ENCODE measurements at regions of chr7 and their contacts with region 1.

Region 1: DNA sequence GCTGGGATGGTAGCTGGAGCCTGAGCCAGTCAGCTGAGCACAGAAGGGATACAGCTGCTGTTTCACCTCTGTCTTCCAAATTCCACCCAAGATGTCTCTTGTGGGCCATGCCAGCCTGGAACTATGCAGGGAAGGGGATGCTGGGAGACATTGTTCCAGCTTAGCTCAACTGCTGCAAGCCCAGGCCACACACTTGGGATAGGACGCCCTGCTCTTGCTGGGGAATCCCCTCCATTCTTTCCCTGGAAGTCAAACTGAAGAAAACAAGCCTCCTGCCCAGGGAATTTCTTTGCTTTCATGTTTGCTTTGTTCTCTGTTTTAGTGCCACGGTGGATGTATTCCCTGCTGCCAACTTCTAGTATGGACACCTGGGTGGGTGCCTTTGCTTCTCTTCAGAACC is 55.2 kb upstream of the CDK13 start:
- DNase-seq: no peak
- ATAC-seq: no peak
- H3K4me3 ChIP-seq: no peak overlapping the region
- H3K27ac ChIP-seq: no peak overlapping the region
- H3K4me1 ChIP-seq: peaks cover 5% of the 10 kb centered on the region
- H3K27me3 ChIP-seq: no peaks in the 10 kb centered on the region
- CTCF ChIP-seq: no peak

Region 2: GRCh38 chr7:39948956-39949928 is 54.3 kb after region 1 on chr7:
- intact Hi-C with region 1: loop called (anchors 2 to 5 kb)
- DNase-seq: peak; percentile 99 to 100
- ATAC-seq: peak; percentile 87 to 93 (median 90)
- H3K4me3 ChIP-seq: peak overlapping the region; percentile 95
- H3K27ac ChIP-seq: peak overlapping the region; percentile 96
- H3K4me1 ChIP-seq: peaks cover 21% of the 10 kb centered on the region
- H3K27me3 ChIP-seq: no peaks in the 10 kb centered on the region
- CTCF ChIP-seq: no peak

Region 3: GRCh38 chr7:40033826-40034225 is 138.9 kb after region 1 on chr7:
- intact Hi-C with region 1: no loop called
- DNase-seq: no peak
- ATAC-seq: no peak
- H3K4me3 ChIP-seq: no peak overlapping the region
- H3K27ac ChIP-seq: no peak overlapping the region
- H3K4me1 ChIP-seq: peaks cover 8% of the 10 kb centered on the region
- H3K27me3 ChIP-seq: no peaks in the 10 kb centered on the region
- CTCF ChIP-seq: no peak

Region 4: DNA sequence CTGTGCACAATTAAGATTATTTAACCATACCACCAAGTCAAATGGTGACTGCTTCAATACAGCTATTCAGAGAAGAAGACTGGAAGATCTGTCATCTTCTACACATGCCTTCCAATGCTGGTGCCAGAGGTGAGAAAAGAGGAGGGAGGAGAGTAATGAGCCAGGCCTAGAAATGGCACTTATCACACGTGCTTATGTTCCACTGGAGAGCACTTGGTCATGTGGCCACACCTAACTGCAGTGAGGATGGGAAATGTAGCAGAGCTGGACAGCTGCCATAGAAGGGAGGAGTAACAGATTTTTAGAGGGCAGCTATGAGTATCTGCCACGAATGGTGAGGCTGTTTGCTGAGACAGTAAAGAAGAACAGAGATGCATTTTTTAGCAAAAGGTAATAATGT is 162.4 kb after region 1 on chr7:
- intact Hi-C with region 1: loop called (anchors 1 to 2 kb)
- DNase-seq: no peak
- ATAC-seq: peak in 2 of 4 donors; percentile 48 to 55
- H3K4me3 ChIP-seq: no peak overlapping the region
- H3K27ac ChIP-seq: no peak overlapping the region
- H3K4me1 ChIP-seq: peaks cover 10% of the 10 kb centered on the region
- H3K27me3 ChIP-seq: no peaks in the 10 kb centered on the region
- CTCF ChIP-seq: no peak

Region 5: GRCh38 chr7:40134428-40135316 is 239.8 kb after region 1 on chr7 and contains the starts of genes MPLKIP and SUGCT:
- intact Hi-C with region 1: loop called in 1 of 2 experiments (anchors 5 kb)
- DNase-seq: peak; percentile 82 to 91
- ATAC-seq: peak; percentile 95 to 97 (median 96)
- H3K4me3 ChIP-seq: peak within 1 kb of the TSS; percentile 99
- H3K27ac ChIP-seq: peak within 1 kb of the TSS; percentile 97
- H3K4me1 ChIP-seq: peaks cover 32% of the 10 kb centered on the region
- H3K27me3 ChIP-seq: no peaks in the 10 kb centered on the region
- CTCF ChIP-seq: peak; percentile 96
- total RNA-seq, gene MPLKIP: 17.3 to 19.0 (median 18.9) TPM
- total RNA-seq, gene SUGCT: 3.2 to 7.3 (median 5.0) TPM